AG04450 (cell line): ENCODE measurements at regions of chr11 and their contacts with region 1.

Region 1: DNA sequence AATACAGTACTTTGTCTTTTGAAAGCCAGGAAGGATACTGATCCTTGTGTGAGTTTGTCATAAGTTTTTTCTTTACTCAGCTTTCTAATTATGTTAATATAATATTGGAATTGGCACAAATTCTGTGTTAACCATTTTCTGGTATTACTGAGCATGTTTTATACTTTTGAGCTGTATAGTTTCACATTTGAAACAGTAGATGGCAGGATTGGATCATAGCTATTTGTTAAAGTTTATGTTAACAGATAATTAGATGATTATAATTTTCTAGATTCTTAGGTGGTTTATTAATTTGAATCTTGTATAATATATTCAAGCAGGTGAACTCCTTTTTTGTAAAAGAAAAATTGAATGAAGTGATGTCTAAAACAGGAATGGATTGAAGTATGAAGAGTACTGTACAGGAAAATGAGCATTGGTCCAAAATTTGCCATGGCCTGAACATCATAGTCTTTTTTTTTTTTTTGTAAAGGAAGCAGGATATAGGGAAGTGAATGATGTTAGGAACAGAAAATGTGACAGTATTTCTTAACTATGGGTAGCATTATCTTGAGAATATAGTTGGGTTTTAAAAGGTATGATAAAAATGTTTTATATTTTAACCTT is 102.0 kb downstream of the CYP2R1 start:
- DNase-seq: no peak
- H3K4me3 ChIP-seq: no peak overlapping the region
- H3K27ac ChIP-seq: no peak overlapping the region
- H3K27me3 ChIP-seq: no peaks in the 10 kb centered on the region
- CTCF ChIP-seq: peak; percentile 56

Region 2: DNA sequence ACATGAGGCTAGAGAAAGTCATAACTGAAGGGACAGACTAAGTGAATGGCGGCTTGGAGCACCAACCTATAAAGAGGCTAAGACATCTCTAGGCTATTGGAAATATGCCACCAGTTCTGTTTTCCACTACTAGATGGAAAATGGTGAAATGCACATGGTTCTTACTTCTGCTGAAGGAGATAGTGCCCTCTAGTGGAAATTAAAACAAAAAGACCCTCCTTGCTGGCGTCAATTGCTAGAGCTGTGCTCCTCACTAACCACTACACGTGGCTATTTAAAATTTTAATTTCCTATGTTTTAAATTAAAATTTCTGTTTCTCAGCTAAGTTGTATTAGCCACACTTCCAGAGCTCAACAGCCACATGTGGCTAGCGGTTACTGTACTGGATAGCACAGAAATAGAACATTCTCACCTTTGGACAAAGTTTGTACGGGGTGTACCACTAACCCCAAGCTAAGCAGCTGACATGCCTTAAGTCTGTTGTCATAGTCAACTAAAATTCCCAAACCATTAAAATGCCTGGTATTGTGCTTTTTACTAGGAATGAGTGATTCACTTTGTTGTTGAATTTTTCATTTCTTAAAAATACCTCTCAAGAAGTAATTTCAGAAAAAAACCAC is 216.3 kb after region 1 on chr11:
- CTCF ChIA-PET with region 1: interaction called, 19 read pairs
- POLR2A ChIA-PET with region 1: no interaction called
- DNase-seq: no peak
- H3K4me3 ChIP-seq: no peak overlapping the region
- H3K27ac ChIP-seq: no peak overlapping the region
- H3K27me3 ChIP-seq: no peaks in the 10 kb centered on the region
- CTCF ChIP-seq: peak; percentile 50

Region 3: DNA sequence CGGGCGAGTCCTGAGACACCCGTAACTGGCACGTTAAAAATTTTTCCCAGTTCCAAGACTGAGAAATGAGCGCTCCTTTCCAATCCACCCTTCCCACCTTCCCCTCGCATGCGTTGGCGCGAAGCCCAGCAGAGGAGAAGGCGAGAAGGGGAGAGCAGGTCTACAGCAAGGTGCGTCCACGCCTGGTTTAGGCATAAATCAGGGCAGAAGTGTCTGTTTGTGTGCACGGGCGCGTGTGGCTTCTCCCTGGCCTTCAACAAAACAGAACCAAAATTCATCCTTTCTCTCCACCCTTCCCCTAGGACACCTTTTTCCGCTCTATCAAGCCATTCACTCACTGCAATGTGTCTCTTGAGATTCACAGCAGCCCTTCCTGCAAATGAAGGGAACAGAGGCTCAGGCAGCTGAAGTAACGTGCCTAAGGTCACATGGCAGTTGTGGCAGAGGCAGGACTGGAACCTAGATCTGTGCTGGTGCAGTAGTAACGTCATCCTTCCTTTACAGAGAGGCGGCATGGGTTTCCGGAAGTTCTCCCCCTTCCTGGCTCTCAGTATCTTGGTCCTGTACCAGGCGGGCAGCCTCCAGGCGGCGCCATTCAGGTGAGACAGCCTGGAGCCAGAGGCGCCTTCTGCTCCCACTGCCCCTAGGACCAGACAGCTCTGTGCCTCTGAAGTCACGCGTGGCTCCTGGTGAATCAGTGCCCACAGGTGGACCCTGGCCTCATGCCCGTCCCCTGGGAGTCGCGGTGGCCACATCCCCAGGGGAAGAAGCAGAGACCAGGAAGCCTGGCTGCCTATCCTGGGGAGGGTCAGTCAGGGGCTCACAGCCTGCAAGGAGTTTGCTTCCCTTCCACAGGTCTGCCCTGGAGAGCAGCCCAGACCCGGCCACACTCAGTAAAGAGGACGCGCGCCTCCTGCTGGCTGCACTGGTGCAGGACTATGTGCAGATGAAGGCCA is 284.5 kb after region 1 on chr11:
- CTCF ChIA-PET with region 1: interaction called, 48 read pairs
- POLR2A ChIA-PET with region 1: no interaction called
- DNase-seq: peak; percentile 20
- H3K4me3 ChIP-seq: peak overlapping the region; percentile 29; the same call in 1 of the 2 replicates
- H3K27ac ChIP-seq: no peak overlapping the region
- H3K27me3 ChIP-seq: peaks cover 31% of the 10 kb centered on the region
- CTCF ChIP-seq: peak; percentile 69